ENCODE measurements at regions of chr20 and their contacts with region 1.

Region 1: DNA sequence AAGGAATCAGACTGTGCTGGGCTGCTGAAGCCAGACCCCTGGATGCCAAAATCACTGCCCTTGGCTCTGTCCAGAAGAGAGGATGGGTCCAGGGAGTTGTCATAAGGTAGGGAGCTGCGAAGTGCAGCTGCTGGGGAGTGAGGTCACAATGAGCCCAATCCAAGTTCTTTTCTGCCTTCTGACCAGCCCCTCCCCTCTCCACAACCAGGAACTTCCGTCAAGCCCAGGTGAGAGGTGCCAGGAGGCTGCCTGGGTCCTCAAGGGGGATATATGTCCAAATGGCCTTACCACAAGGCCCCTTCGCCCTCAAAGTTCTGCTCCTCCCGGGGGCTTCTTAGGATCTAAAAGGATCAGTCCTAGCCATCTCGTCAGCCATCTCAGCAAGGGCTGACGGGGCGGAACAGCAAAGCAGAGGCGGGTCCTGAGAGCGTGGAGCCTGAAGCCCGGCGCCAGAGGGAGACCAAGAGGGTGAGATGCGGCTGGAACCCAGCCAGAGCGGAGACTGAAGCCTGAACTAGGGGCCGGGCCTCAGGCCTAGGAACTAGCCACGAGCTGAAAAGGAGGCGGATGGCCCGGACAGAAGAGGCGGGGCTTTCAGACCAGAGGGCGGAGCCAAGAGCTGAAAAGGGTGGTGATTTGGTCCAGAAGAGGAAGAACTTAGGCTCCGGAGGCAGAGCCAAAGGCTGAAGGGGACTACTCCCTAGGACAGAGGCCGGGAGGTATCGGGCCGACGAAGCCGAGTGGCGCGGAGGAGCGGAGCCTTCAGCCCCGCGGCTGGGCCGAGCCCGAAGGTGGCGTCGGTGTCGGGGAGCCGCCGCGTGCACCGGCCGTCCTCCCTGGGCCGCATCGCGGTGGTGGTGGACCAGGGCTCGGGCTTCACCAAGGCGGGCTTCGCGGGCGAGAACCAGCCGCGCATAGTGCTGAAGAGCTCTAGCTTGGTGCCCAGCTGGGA is at the start of gene ACTL10:
- DNase-seq: peak; percentile 98
- ATAC-seq: peak; percentile 73 to 91 (median 83)
- H3K4me3 ChIP-seq: peak within 1 kb of the TSS; percentile 30 to 81 (median 62)
- H3K27ac ChIP-seq: peak within 1 kb of the TSS; percentile 63 to 89 (median 82)
- H3K4me1 ChIP-seq: peaks cover 19 to 60% (median 44%) of the 10 kb centered on the region in 9 donors
- H3K27me3 ChIP-seq: no peaks in the 10 kb centered on the region
- CTCF ChIP-seq: peak in 6 of 9 donors; percentile 13 to 65 (median 52)
- total RNA-seq, gene ACTL10: 0.11 to 0.39 (median 0.25) TPM in 6 of 10 donors, not detected in the others

Region 2: DNA sequence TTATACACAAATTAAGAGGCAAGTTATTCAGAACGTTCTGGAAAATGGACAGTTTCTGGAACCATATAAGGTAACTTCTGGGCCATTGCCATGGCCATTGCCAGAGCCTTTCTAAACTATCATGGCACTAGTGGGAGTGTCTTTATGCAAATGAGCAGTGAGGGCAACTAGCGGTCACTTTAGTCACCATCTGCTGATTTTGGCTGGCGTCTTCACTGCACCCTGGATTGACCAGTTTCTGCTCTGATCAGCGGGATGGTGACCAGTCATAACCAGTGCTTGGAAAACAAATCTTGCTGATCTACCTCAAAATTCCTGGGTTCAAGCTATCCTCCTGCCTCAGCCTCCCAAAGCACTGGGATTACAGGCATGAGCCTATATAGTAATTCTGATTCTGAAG is 215.7 kb before region 1 on chr20:
- intact Hi-C with region 1: loop called in 6 of 10 experiments (anchors 2 to 5 kb)
- DNase-seq: no peak
- ATAC-seq: no peak
- H3K4me3 ChIP-seq: no peak overlapping the region
- H3K27ac ChIP-seq: no peak overlapping the region
- H3K4me1 ChIP-seq: no peaks in the 10 kb centered on the region
- H3K27me3 ChIP-seq: no peaks in the 10 kb centered on the region
- CTCF ChIP-seq: no peak

Region 3: GRCh38 chr20:34403908-34404307 is 737.3 kb after region 1 on chr20:
- intact Hi-C with region 1: no loop called
- DNase-seq: no peak
- ATAC-seq: no peak
- H3K4me3 ChIP-seq: no peak overlapping the region
- H3K27ac ChIP-seq: peak overlapping the region in 1 of 10 donors; percentile 45
- H3K4me1 ChIP-seq: peaks cover 0 to 56% (median 39%) of the 10 kb centered on the region in 9 donors
- H3K27me3 ChIP-seq: no peaks in the 10 kb centered on the region
- CTCF ChIP-seq: no peak